ENCODE measurements at regions of chr19 and their contacts with region 1.

Region 1: GRCh38 chr19:17390665-17391370 is 3.2 kb downstream of the CCDC194 start:
- DNase-seq: peak; percentile 94
- H3K4me3 Mint-ChIP-seq: peak overlapping the region; percentile 77
- H3K27ac Mint-ChIP-seq: no peak overlapping the region
- H3K4me1 Mint-ChIP-seq: peaks cover 10% of the 10 kb centered on the region
- H3K27me3 Mint-ChIP-seq: no peaks in the 10 kb centered on the region
- CTCF ChIP-seq: peak; percentile 67

Region 2: GRCh38 chr19:16654140-16654539 is 736.7 kb before region 1 on chr19:
- CTCF ChIA-PET with region 1: no interaction called
- POLR2A ChIA-PET with region 1: no interaction called
- intact Hi-C with region 1: no loop called
- DNase-seq: peak; percentile 17
- H3K4me3 Mint-ChIP-seq: no peak overlapping the region
- H3K27ac Mint-ChIP-seq: no peak overlapping the region
- H3K4me1 Mint-ChIP-seq: peaks cover 7% of the 10 kb centered on the region
- H3K27me3 Mint-ChIP-seq: no peaks in the 10 kb centered on the region
- CTCF ChIP-seq: no peak

Region 3: DNA sequence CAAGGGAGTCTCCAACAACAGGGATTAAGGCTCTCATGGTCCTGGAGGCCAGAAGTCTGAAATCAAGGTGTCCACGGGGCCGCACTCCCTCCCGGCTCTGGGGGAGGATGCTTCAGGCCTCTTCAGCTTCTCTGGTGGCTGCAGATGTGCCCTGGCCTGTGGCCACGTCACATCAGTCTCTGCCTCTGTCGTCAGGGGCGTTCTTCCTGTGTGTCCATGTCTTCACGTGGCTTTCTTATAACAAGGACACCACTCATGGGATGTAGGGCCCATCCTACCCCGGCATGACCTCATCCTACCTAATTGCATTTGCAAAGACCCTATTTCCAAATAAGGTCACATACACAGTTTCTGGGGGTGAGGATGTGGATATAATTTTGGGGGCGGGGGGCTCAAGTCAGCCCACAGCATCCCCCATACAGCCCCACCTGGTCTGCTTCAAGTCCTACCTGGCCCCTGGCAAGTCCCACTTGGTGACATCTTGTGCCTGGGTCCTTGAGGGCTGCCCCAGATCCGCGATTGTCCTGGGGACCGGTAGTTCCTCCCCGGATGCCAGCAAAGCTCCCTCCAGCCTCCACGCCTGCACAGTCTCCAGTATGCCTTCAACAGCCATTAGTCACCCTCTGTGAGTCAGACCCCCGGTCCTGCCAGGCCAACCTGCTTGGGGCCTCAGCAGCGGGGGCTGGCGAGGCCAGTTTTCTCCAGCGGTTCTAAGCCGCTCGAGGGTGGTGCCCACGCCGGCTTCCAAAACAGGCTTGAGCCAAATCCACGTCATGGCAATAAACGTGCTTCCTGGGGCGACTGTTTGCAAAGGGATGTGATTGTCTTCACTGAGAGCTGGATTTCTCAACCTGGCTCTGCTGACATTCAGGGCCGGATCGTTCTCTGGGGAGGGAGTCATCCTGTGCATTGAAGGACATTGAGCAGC is 283.0 kb before region 1 on chr19:
- CTCF ChIA-PET with region 1: no interaction called
- POLR2A ChIA-PET with region 1: no interaction called
- intact Hi-C with region 1: no loop called
- DNase-seq: peak; percentile 99
- H3K4me3 Mint-ChIP-seq: peak overlapping the region; percentile 59
- H3K27ac Mint-ChIP-seq: peak overlapping the region; percentile 87
- H3K4me1 Mint-ChIP-seq: peaks cover 13% of the 10 kb centered on the region
- H3K27me3 Mint-ChIP-seq: no peaks in the 10 kb centered on the region
- CTCF ChIP-seq: no peak

Region 4: DNA sequence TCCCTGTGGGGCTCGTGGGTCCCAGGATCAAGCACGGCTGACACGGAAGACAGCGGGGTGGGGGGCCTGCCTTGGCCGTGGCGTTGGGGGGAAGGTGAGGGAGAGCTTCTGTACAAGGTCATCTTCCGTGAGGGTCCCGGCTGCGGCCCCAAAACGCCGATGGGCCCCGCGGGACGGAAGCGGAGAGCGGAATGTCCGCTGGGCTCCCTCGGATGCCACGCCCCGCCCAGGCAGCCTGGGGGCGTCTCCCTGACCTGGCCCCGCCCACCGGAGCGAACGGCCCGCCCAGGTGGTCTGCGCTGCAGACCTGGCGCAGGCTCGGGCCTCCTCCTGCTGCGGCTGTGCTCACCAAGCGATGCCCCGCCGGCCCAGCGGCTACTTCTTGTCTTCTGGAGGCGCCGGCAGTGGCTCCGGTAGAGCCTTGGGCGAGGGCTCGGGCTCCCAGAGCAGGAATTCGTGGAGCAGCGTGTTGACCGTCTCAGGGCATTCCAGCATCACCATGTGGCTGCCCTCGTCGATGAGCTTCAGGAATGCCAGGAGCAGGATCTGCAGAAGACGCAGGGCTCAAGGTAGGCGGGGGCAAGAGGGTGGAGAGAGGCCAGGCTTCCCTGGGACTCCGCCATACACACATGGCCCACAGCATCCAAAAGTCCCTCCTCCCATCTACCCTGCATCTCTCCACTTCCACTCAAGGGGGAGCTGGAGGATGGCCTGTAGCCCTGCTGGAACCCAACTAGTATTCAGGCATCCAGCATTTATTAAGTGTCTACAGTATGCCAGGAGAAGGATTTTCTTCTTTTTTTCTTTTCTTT is 98.3 kb before region 1 on chr19:
- CTCF ChIA-PET with region 1: interaction called, 6 read pairs
- POLR2A ChIA-PET with region 1: interaction called, 6 read pairs
- intact Hi-C with region 1: loop called (anchors 1 kb)
- DNase-seq: peak; percentile 98
- H3K4me3 Mint-ChIP-seq: peak overlapping the region; percentile 80
- H3K27ac Mint-ChIP-seq: peak overlapping the region; percentile 31
- H3K4me1 Mint-ChIP-seq: peaks cover 4% of the 10 kb centered on the region
- H3K27me3 Mint-ChIP-seq: no peaks in the 10 kb centered on the region
- CTCF ChIP-seq: peak; percentile 80

Region 5: DNA sequence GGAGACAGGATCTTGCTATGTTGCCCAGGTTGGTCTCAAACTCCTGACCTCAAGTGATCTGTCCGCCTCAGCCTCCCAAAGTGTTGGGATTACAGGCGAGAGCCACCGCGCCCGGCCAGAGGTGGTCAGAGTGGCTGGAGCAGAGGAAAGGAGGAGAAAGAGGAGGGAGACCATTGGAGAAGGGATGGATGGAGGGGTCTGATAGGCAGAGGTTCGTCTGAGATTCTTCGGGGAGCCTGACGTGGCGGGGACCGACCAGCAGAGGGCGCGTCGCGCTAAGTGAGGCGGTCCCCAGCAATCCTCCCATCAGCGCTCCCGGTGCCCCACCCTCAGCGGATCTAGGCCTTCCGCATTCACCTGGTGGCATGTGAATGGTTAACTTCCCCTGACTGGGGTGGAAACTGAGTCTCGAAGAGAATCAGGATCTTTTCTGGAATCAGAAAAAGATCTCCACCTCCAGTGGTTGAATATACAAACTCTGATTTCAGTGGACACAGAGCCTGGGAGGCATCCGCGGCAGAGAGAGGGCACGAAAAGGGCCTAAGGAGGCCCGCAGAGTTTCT is 44.6 kb before region 1 on chr19:
- CTCF ChIA-PET with region 1: interaction called, 84 read pairs
- POLR2A ChIA-PET with region 1: no interaction called
- intact Hi-C with region 1: loop called (anchors 1 kb)
- DNase-seq: peak; percentile 79
- H3K4me3 Mint-ChIP-seq: no peak overlapping the region
- H3K27ac Mint-ChIP-seq: no peak overlapping the region
- H3K4me1 Mint-ChIP-seq: peaks cover 15% of the 10 kb centered on the region
- H3K27me3 Mint-ChIP-seq: no peaks in the 10 kb centered on the region
- CTCF ChIP-seq: peak; percentile 90

Region 6: DNA sequence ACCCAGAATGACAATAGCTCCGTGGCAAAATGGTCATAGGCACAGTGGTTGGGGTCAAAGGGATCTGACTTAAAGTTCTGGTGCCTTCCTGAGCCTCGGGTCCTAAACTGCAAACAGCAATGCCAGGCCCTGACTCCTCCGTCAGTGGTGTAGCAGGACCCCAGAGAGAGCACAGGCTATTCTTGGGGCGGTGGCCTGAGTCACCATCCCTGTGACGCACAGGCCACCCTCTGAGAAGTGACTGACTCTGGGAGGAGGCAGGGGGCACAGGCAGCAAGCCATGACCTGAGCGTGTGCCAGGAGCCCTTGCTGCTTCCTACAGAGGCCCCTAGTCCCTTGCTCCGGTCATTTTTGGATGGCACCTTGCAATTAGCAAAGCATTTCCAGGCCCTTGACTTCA is 32.4 kb before region 1 on chr19:
- CTCF ChIA-PET with region 1: interaction called, 16 read pairs
- POLR2A ChIA-PET with region 1: no interaction called
- intact Hi-C with region 1: no loop called
- DNase-seq: peak; percentile 93
- H3K4me3 Mint-ChIP-seq: no peak overlapping the region
- H3K27ac Mint-ChIP-seq: peak overlapping the region; percentile 43
- H3K4me1 Mint-ChIP-seq: peaks cover 18% of the 10 kb centered on the region
- H3K27me3 Mint-ChIP-seq: no peaks in the 10 kb centered on the region
- CTCF ChIP-seq: no peak

Region 7: DNA sequence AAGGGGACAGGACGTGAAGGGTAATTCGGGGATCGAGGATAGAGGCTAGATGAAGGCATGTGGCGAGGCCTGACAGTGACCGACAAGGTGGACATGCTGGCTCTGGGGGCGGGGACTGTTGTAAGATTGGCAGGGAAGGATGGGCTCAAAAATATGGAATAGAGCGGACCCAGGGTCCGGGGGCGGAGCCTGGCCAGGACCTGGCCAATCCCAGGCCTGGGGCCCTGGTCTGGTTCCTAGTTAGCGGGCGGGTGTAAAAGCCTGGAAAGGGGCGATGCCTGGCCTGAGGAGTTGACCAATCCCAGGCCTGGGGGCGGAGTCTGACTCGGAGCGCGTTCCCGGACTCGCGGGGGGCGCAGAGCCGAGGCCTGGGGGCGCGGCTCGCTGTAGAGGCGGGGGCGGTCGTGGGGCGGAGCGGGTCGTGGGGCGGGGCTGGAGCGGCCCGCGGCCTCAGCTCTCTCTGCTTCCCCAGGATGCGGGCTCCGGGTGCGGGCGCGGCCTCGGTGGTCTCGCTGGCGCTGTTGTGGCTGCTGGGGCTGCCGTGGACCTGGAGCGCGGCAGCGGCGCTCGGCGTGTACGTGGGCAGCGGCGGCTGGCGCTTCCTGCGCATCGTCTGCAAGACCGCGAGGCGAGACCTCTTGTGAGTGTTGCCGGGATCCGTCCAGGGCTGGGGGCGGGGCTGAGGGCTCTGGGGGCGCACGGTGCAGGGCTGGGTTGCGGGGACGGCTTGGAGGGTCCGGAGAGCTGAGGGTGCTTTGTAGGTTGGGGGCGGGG is 79.4 kb after region 1 on chr19 and contains the start of gene SLC27A1:
- CTCF ChIA-PET with region 1: interaction called, 32 read pairs
- POLR2A ChIA-PET with region 1: interaction called, 3 read pairs
- intact Hi-C with region 1: loop called (anchors 1 kb)
- DNase-seq: peak; percentile 99
- H3K4me3 Mint-ChIP-seq: peak within 1 kb of the TSS; percentile 91
- H3K27ac Mint-ChIP-seq: peak within 1 kb of the TSS; percentile 97
- H3K4me1 Mint-ChIP-seq: peaks cover 41% of the 10 kb centered on the region
- H3K27me3 Mint-ChIP-seq: no peaks in the 10 kb centered on the region
- CTCF ChIP-seq: no peak
- total RNA-seq, gene SLC27A1: 3.4 and 5.0 TPM in 2 replicates

Region 8: DNA sequence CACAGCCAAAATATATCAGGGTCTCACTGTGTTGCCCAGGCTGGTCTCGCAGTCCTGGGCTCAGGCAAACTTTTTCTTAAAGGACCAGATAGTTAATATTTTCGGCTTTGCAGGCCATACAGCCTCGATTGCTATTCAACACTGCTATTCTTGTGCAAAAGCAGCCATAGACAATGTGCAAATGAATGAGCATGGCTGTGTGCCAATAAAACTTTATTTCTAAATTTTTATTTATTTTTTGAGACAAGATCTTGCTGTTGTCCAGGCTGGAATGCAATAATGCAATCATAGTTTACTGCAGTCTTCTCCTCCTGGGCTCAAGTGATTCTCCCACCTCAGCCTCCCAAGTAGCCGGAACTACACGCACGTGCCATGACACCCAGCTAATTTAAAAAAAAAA is 112.4 kb after region 1 on chr19:
- CTCF ChIA-PET with region 1: no interaction called
- POLR2A ChIA-PET with region 1: no interaction called
- intact Hi-C with region 1: no loop called
- DNase-seq: no peak
- H3K4me3 Mint-ChIP-seq: no peak overlapping the region
- H3K27ac Mint-ChIP-seq: peak overlapping the region; percentile 33
- H3K4me1 Mint-ChIP-seq: peaks cover 21% of the 10 kb centered on the region
- H3K27me3 Mint-ChIP-seq: no peaks in the 10 kb centered on the region
- CTCF ChIP-seq: no peak